Activated CD4-positive, alpha-beta memory T cell treated with anti-CD3 and anti-CD28 coated beads for 36 hours (primary cell): ENCODE measurements at regions of chr10 and their contacts with region 1.

Region 1: GRCh38 chr10:67779465-67780203 is 58.4 kb downstream of the DNAJC12 start:
- DNase-seq: peak; percentile 70
- H3K4me3 Mint-ChIP-seq: no peak overlapping the region
- H3K27ac Mint-ChIP-seq: no peak overlapping the region
- H3K4me1 Mint-ChIP-seq: peaks cover 23% of the 10 kb centered on the region
- H3K27me3 Mint-ChIP-seq: no peaks in the 10 kb centered on the region

Region 2: GRCh38 chr10:67520924-67521520 is 258.6 kb before region 1 on chr10:
- CTCF ChIA-PET with region 1: interaction called, 10 read pairs
- POLR2A ChIA-PET with region 1: no interaction called
- intact Hi-C with region 1: loop called (anchors 5 kb)
- DNase-seq: peak; percentile 31
- H3K4me3 Mint-ChIP-seq: no peak overlapping the region
- H3K27ac Mint-ChIP-seq: no peak overlapping the region
- H3K4me1 Mint-ChIP-seq: peaks cover 2% of the 10 kb centered on the region
- H3K27me3 Mint-ChIP-seq: no peaks in the 10 kb centered on the region

Region 3: GRCh38 chr10:67697724-67698131 is 81.9 kb before region 1 on chr10:
- CTCF ChIA-PET with region 1: interaction called, 300 read pairs
- POLR2A ChIA-PET with region 1: interaction called, 3 read pairs
- intact Hi-C with region 1: loop called (anchors 1 kb)
- DNase-seq: no peak
- H3K4me3 Mint-ChIP-seq: no peak overlapping the region
- H3K27ac Mint-ChIP-seq: no peak overlapping the region
- H3K4me1 Mint-ChIP-seq: peaks cover 9% of the 10 kb centered on the region
- H3K27me3 Mint-ChIP-seq: peaks cover 12% of the 10 kb centered on the region

Region 4: DNA sequence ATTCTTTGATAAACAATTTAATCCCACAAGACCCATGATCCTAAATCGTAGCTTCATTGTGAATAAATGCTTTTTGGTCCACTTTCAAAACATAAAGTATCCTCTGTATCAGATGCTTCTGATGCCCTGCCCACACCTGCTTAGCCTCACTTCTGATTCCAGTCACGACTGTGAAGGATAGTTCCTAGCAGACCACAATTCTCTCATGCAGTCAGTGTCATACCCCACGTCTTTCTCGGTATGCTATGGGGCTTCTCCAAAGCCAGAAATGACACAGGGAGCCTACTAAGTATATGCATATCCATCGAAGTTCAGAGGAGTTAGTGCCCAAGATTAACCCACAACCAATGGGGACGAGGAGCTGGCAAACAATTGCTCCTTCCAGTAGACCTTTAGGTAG is 56.0 kb before region 1 on chr10:
- CTCF ChIA-PET with region 1: interaction called, 11 read pairs
- POLR2A ChIA-PET with region 1: no interaction called
- intact Hi-C with region 1: no loop called
- DNase-seq: no peak
- H3K4me3 Mint-ChIP-seq: no peak overlapping the region
- H3K27ac Mint-ChIP-seq: no peak overlapping the region
- H3K4me1 Mint-ChIP-seq: no peaks in the 10 kb centered on the region
- H3K27me3 Mint-ChIP-seq: no peaks in the 10 kb centered on the region

Region 5: GRCh38 chr10:67912339-67912946 is 132.8 kb after region 1 on chr10:
- CTCF ChIA-PET with region 1: no interaction called
- POLR2A ChIA-PET with region 1: no interaction called
- intact Hi-C with region 1: loop called (anchors 10 kb)
- DNase-seq: no peak
- H3K4me3 Mint-ChIP-seq: no peak overlapping the region
- H3K27ac Mint-ChIP-seq: peak overlapping the region; percentile 75
- H3K4me1 Mint-ChIP-seq: peaks cover 37% of the 10 kb centered on the region
- H3K27me3 Mint-ChIP-seq: no peaks in the 10 kb centered on the region

Region 6: GRCh38 chr10:68074775-68075549 is 295.3 kb after region 1 on chr10 and contains the start of gene HERC4:
- CTCF ChIA-PET with region 1: no interaction called
- POLR2A ChIA-PET with region 1: no interaction called
- intact Hi-C with region 1: no loop called
- DNase-seq: peak; percentile 94
- H3K4me3 Mint-ChIP-seq: peak within 1 kb of the TSS; percentile 89
- H3K27ac Mint-ChIP-seq: peak within 1 kb of the TSS; percentile 89
- H3K4me1 Mint-ChIP-seq: peaks cover 35% of the 10 kb centered on the region
- H3K27me3 Mint-ChIP-seq: no peaks in the 10 kb centered on the region
- total RNA-seq, gene HERC4: 55.7 to 59.0 TPM

Region 7: DNA sequence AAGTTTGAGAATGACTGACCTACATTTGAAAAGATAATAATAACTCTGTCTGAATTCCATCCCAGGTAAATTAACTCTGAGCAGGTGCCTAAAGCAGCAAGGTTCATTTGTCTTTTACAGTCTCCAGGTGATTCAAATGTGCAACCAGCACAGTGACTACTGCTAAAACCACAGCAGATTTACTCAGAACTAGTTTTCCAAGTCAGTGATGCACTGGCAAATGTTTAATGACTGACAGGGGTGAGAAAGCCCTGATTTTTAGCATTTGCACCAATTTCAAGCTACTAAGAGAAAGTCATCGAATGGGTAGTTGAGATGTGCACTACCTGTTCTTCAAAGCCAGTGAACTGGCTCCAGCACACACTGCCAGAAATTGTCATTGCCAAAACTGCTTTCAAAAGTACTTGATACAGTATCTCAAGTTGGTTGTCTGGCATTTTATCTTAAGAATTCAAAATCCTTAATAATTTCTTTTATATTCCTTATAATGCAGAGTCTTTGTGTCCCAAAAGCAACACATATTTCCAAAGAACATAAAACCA is 392.0 kb after region 1 on chr10:
- CTCF ChIA-PET with region 1: no interaction called
- POLR2A ChIA-PET with region 1: no interaction called
- intact Hi-C with region 1: no loop called
- DNase-seq: no peak
- H3K4me3 Mint-ChIP-seq: no peak overlapping the region
- H3K27ac Mint-ChIP-seq: no peak overlapping the region
- H3K4me1 Mint-ChIP-seq: no peaks in the 10 kb centered on the region
- H3K27me3 Mint-ChIP-seq: no peaks in the 10 kb centered on the region